Activated CD4-positive, alpha-beta T cell treated with anti-CD3 and anti-CD28 coated beads, Interleukin-2, amount 10 ng/mL, durations not matched to agents 7 days and 5 days (primary cell): ENCODE measurements at regions of chr20 and their contacts with region 1.

Region 1: GRCh38 chr20:47272893-47273590 is 83.5 kb downstream of the ZMYND8 start:
- DNase-seq: peak; percentile 71
- H3K4me3 Mint-ChIP-seq: no peak overlapping the region
- H3K27ac Mint-ChIP-seq: no peak overlapping the region
- H3K4me1 Mint-ChIP-seq: peaks cover 32% of the 10 kb centered on the region
- H3K27me3 Mint-ChIP-seq: no peaks in the 10 kb centered on the region

Region 2: DNA sequence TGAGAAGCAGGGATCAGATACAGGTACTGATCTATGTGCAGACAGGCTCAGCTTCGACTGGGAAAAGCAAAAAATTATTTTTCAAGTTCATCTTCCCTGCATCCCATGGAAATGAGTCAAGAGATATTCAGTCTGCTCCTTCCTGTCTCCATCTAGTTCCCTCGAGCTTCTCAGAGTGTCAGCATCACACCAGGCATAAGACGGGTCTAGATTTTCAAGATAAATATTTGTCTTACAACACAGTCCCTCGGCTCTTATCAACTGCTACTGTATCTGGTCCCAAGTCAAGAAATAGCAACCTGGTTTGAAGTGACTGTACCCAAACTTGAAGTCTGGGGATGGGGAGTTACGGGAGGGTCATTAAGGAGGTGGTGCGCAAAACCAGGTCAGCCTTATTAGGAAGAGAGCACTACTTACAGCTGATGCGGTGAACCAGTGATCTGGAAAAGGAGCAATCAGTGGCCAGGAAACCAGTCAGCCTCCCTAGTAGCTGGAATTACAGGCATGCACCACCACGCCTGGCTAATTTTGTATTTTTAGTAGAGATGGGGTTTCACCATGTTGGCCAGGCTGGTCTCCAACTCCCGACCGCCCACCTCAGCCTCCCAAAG is 53.7 kb after region 1 on chr20:
- CTCF ChIA-PET with region 1: no interaction called
- POLR2A ChIA-PET with region 1: no interaction called
- DNase-seq: no peak
- H3K4me3 Mint-ChIP-seq: no peak overlapping the region
- H3K27ac Mint-ChIP-seq: no peak overlapping the region
- H3K4me1 Mint-ChIP-seq: peaks cover 23% of the 10 kb centered on the region
- H3K27me3 Mint-ChIP-seq: no peaks in the 10 kb centered on the region

Region 3: GRCh38 chr20:47356526-47357295 is 83.7 kb after region 1 on chr20 and contains the start of gene ZMYND8:
- CTCF ChIA-PET with region 1: interaction called, 16 read pairs
- POLR2A ChIA-PET with region 1: interaction called, 4 read pairs
- DNase-seq: peak; percentile 93
- H3K4me3 Mint-ChIP-seq: peak within 1 kb of the TSS; percentile 92
- H3K27ac Mint-ChIP-seq: peak within 1 kb of the TSS; percentile 99
- H3K4me1 Mint-ChIP-seq: peaks cover 63% of the 10 kb centered on the region
- H3K27me3 Mint-ChIP-seq: no peaks in the 10 kb centered on the region
- total RNA-seq, gene ZMYND8: 44.6 to 55.6 TPM